Panc1 (cell line): ENCODE measurements at regions of chr2 and their contacts with region 1.

Region 1: DNA sequence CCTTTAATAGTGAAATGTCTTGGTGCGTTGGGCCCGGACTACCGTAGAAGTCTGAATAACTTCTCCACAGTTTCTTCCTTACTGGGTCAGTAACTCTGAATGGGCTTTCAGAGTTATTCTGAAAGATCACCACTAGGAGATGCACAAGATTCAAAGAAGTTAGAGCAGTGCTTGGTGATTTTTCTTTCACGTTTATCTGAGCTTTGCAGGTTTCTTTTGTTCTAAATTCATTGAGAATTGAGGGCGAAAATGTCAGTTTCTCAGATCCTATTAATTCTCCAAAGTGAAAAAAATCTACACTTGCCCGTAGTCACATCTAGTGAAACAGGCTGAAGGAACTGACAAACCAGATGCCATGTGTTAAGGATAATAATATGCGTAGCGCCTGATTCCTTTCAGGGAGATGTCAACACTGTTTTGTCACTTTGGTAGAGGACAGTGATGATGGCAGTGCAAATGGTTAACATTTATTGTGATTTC is 70.1 kb downstream of the QPCT start:
- DNase-seq: peak; percentile 64
- ATAC-seq: peak; percentile 86
- H3K4me3 ChIP-seq: no peak overlapping the region
- H3K27ac ChIP-seq: no peak overlapping the region
- H3K4me1 ChIP-seq: no peaks in the 10 kb centered on the region
- H3K27me3 ChIP-seq: no peaks in the 10 kb centered on the region
- CTCF ChIP-seq: peak; percentile 86

Region 2: DNA sequence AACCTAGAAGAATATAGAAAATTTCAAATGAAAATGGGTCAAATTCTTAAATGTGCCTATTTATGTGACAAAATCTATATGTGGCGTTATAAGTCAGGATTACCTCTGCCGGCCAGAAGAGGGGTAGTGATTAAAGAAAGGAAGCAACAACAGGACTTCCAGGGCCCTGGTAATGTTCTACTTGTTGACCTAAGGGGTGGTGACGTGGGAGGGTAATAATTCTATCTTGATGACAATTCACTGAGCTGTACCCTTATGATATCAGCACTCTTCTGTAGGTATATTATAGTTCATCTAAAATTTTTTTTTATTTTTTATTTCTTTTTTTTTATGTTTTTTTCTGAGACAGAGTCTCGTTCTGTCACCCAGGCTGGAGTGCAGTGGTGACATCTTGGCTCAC is 536.1 kb before region 1 on chr2:
- CTCF ChIA-PET with region 1: no interaction called
- POLR2A ChIA-PET with region 1: no interaction called
- in situ Hi-C with region 1: no loop called
- intact Hi-C with region 1: no loop called
- DNase-seq: no peak
- ATAC-seq: no peak
- H3K4me3 ChIP-seq: no peak overlapping the region
- H3K27ac ChIP-seq: no peak overlapping the region
- H3K4me1 ChIP-seq: no peaks in the 10 kb centered on the region
- H3K27me3 ChIP-seq: no peaks in the 10 kb centered on the region
- CTCF ChIP-seq: no peak

Region 3: DNA sequence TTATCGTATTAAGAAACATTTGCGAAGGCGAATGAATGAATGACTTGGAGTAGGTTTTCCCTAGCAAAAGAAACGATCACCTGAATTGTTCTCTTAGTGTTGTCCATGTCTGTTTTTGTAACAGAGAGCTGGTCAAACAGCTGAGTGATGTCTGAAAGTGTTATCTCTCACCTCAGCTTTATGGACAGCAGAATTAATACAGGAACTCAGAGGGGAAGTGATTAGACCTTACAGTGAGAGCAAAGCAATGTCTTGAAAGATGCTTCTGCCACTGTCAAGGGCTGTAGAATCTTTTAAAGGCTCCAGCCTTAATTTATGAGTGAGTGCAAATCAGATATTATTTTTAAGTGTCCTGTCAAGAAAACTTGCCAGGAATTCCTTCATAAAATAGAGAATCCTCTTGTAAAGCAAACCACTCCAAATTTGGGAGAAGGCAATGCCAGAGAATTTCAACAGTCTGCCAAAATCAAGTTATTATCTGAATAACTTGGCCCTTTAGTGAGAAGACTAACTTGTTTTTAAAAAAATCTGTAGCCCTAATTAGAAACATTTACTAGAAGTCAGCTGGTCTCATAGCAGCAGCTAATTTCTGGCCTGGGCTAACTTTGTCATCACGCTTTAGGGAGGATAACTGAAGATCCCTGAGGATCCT is 196.3 kb after region 1 on chr2:
- CTCF ChIA-PET with region 1: interaction called, 10 read pairs
- POLR2A ChIA-PET with region 1: no interaction called
- in situ Hi-C with region 1: no loop called
- intact Hi-C with region 1: no loop called
- DNase-seq: no peak
- ATAC-seq: no peak
- H3K4me3 ChIP-seq: no peak overlapping the region
- H3K27ac ChIP-seq: no peak overlapping the region
- H3K4me1 ChIP-seq: no peaks in the 10 kb centered on the region
- H3K27me3 ChIP-seq: no peaks in the 10 kb centered on the region
- CTCF ChIP-seq: no peak

Region 4: GRCh38 chr2:37672104-37672869 is 257.8 kb after region 1 on chr2:
- CTCF ChIA-PET with region 1: no interaction called
- POLR2A ChIA-PET with region 1: no interaction called
- in situ Hi-C with region 1: no loop called
- intact Hi-C with region 1: loop called (anchors 10 kb)
- DNase-seq: no peak
- ATAC-seq: peak; percentile 73
- H3K4me3 ChIP-seq: peak overlapping the region; percentile 73 to 80
- H3K27ac ChIP-seq: no peak overlapping the region
- H3K4me1 ChIP-seq: peaks cover 6% of the 10 kb centered on the region
- H3K27me3 ChIP-seq: peaks cover 4% of the 10 kb centered on the region; the same call in 1 of the 2 replicates
- CTCF ChIP-seq: no peak

Region 5: DNA sequence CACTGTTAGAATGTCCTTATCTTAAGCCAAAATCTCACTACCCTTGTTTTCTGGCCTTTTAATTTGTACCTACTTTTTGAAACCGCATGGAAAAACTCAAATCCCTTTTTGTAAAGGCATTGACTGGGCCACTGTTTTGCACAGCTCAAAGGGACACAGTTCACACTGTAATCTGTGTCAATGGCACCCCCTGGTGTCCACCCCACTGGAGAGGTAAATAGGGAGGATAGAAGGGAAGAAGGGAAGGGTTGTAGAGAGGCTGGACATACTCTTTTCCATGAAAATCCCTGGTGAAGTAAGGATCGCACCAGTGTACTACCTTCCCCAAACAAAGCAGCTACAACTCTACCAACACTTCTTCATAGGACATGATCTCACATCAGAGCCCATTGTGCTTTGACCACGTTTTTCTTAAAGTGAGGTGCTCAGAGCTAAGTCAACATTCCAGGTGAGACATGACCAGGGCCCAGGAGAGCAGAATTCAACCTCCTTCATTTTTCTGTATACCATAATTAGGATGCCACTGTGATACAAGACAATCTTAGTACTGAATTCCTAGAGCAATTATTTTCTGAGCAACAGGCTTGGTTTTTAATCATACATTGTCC is 418.2 kb after region 1 on chr2:
- CTCF ChIA-PET with region 1: interaction called, 6 read pairs
- POLR2A ChIA-PET with region 1: no interaction called
- in situ Hi-C with region 1: no loop called
- intact Hi-C with region 1: loop called (anchors 1 kb)
- DNase-seq: peak; percentile 67
- ATAC-seq: peak; percentile 97
- H3K4me3 ChIP-seq: no peak overlapping the region
- H3K27ac ChIP-seq: no peak overlapping the region
- H3K4me1 ChIP-seq: no peaks in the 10 kb centered on the region
- H3K27me3 ChIP-seq: no peaks in the 10 kb centered on the region; the same call in 1 of the 2 replicates
- CTCF ChIP-seq: peak; percentile 80

Region 6: DNA sequence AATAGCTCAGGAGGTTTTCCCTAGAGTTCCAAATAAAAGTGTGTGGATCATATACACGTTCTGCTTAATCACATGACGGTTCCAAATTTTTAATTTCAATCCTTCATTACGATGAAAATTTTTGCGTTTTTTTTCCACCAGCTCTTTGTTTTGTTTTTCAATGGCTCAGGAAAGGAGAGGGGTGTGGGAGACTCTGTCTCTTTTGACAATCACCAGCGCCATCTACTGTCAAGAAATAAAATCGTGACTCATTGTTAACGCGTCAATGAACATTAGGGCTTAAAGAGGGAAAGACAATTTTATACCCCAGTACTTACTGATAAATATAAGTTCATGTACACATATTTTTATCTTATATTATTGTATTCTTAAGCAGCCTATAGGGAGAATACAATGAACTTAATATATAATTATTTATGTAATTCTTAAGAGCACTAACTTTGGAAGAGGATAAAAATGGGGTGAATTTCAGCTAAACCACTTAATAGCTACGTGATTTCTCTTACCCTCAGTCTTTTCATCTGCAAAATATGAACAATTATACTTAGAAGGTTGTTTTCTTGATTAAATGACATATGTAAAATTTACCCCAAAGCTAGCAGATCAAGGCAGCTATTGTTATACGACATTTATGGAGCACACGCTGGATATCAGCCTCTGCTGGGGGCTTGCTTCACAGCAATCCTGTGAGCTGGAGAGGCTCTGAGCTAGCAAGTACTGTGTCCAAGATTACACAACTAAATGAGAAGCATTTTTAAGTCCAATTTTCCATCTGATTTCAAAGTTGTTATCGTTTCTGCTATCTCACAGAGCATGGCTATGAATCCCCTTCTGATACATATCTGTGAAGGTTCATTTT is 463.2 kb after region 1 on chr2:
- CTCF ChIA-PET with region 1: interaction called, 8 read pairs
- POLR2A ChIA-PET with region 1: interaction called, 6 read pairs
- in situ Hi-C with region 1: no loop called
- intact Hi-C with region 1: loop called (anchors 5 kb)
- DNase-seq: peak; percentile 32
- ATAC-seq: peak; percentile 84
- H3K4me3 ChIP-seq: no peak overlapping the region
- H3K27ac ChIP-seq: no peak overlapping the region
- H3K4me1 ChIP-seq: no peaks in the 10 kb centered on the region
- H3K27me3 ChIP-seq: peaks cover 4% of the 10 kb centered on the region; the same call in 1 of the 2 replicates
- CTCF ChIP-seq: peak; percentile 74; the same call in 1 of the 2 replicates